Naive thymus-derived CD8-positive, alpha-beta T cell (primary cell): ENCODE measurements at regions of chr16 and their contacts with region 1.

Region 1: DNA sequence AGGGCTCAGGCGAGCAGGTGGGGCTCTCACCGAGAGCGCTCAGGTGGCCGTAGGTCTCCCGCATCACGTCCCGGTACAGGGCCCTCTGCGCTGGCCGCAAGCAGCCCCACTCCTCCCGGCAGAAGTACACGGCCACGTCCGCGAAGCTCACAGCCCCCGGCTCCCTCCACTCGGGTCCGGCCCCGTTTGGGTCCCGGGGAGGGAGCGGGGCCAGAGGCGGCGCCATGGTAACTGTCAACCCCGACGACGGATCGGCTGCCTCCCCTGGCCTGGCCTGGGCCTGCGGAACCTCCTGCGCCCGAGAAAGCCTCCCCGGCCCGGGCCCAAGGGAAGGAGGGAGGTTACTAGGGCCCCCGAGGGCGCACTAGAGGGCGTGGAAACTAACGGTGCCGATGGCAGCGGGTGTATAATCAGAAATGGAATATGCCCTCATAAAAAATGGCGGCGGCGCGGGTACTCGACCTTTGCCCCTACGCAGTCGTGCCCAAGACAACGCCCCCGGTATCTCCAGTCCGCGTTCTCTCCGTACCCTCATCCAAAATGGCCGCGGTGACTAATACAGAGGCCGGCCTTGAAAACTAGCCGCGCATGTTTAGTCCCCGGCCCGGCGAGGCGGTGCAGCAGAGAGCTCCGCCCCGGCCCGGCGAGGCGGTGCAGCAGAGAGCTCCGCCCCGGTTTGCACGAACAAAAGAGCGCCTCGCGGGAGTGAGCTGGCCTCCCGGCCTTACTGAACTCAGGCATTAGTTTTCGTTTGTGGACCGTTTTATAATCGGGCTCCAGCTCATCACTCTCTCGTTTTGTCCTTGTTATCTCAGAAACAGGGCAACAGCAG is at the start of gene ZNF764:
- DNase-seq: peak; percentile 81 to 98 (median 93)
- ATAC-seq: peak; percentile 90
- H3K4me3 Mint-ChIP-seq: peak within 1 kb of the TSS; percentile 82 to 93 (median 86)
- H3K27ac Mint-ChIP-seq: peak within 1 kb of the TSS; percentile 85 to 97 (median 94)
- H3K4me1 Mint-ChIP-seq: peaks cover 13 to 53% (median 48%) of the 10 kb centered on the region in 4 donors
- H3K27me3 Mint-ChIP-seq: no peaks in the 10 kb centered on the region
- polyA plus RNA-seq, gene ZNF764: 3.6 to 6.5 (median 4.0) TPM

Region 2: DNA sequence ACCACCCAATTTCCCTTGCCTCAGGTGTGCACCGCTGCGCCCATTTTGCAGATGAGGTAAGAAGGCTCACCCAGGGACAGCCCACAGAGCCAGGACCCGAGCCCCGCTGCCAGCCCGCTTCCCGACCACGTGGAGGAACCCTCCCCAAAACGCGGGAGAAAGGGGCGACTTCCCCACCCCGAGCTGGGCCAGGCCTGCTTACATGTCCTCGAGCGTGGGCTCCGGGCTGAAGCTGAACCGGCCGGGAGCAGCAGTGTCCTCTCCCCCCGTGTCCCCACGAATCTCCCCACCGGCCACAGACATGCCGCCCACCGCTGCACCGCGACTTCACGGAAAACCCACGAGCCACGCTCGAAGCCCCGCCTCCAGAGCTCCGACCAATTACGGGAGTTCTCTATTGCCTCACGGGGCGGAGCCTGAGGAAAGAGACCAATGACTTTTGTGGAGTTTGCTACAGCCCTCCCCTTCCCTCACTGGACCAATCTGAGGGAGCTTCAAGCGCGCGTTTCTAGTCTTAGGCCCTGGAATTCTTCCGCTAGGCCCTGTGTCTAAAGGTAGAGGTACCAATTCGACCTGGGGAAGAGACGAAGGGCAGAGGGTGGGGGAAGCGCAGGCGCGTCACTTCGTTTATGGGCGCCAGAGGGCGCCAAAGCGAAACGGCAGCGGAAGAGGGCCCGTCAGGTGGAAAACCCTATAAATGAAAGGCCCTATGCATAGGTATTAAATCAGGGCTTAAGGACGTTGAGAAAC is 128.3 kb before region 1 on chr16 and contains the start of gene DCTPP1:
- POLR2A ChIA-PET with region 1: interaction called, 20 read pairs
- DNase-seq: peak; percentile 84 to 99 (median 96)
- ATAC-seq: peak; percentile 97
- H3K4me3 Mint-ChIP-seq: no peak within 1 kb of the TSS
- H3K27ac Mint-ChIP-seq: peak within 1 kb of the TSS in 4 of 10 donors; percentile 52 to 80 (median 75)
- H3K4me1 Mint-ChIP-seq: peaks cover 5 to 35% (median 12%) of the 10 kb centered on the region in 4 donors
- H3K27me3 Mint-ChIP-seq: no peaks in the 10 kb centered on the region
- polyA plus RNA-seq, gene DCTPP1: 63.0 to 79.6 (median 64.0) TPM

Region 3: GRCh38 chr16:30526823-30527635 is 31.1 kb before region 1 on chr16:
- POLR2A ChIA-PET with region 1: interaction called, 105 read pairs
- DNase-seq: peak; percentile 64 to 92 (median 72)
- ATAC-seq: peak; percentile 71 to 82
- H3K4me3 Mint-ChIP-seq: peak overlapping the region; percentile 82 to 95 (median 90)
- H3K27ac Mint-ChIP-seq: peak overlapping the region; percentile 90 to 96 (median 94)
- H3K4me1 Mint-ChIP-seq: peaks cover 10 to 40% (median 23%) of the 10 kb centered on the region in 4 donors
- H3K27me3 Mint-ChIP-seq: no peaks in the 10 kb centered on the region

Region 4: DNA sequence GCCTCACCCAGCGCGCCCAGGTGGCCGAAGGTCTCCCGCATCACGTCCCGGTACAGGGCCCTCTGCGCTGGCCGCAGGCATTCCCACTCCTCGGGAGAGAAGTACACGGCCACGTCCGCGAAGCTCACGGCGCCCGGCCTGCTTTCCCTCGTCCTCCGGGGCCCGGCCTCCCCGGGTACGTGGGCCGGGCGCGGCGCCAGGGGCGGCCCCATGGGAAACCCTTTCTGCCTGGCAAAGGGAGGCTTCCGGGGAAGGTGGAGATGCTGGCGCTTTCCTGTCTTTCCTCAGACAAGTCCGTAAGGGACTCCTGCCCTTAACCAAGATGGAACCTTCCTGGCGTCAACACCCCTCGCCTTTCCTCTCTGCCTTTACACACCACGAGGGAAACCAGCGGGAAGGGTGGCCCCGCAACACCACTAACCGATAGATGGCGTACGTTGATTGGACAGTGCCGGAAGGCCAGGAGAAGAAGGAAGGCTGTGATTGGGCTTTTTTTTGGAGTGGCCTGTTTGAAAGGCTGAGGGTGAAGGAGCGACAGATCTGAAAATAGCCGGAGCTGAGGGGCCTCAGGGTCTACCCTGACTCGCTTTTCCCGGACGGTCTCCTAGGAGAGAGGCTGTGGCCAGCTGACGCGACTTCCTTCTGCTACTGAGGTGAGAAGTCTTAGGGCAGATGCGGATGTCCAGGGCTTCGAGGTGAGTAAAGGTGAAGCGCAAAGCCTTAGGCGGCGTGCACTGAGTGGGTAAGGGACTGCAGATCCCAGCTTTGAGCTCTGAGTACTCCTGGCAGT is 27.4 kb after region 1 on chr16 and contains the start of gene ZNF785:
- POLR2A ChIA-PET with region 1: interaction called, 14 read pairs
- DNase-seq: peak; percentile 75 to 97 (median 92)
- ATAC-seq: peak; percentile 99 to 100
- H3K4me3 Mint-ChIP-seq: peak within 1 kb of the TSS; percentile 82 to 96 (median 90)
- H3K27ac Mint-ChIP-seq: peak within 1 kb of the TSS; percentile 83 to 95 (median 92)
- H3K4me1 Mint-ChIP-seq: peaks cover 9 to 48% (median 28%) of the 10 kb centered on the region in 4 donors
- H3K27me3 Mint-ChIP-seq: peaks cover 0 to 1% (median 0%) of the 10 kb centered on the region in 5 donors
- polyA plus RNA-seq, gene ZNF785: 1.6 to 3.5 (median 3.4) TPM